ENCODE measurements at regions of chr7 and their contacts with region 1.

Region 1: GRCh38 chr7:65750511-65751344 is 122.1 kb upstream of the VKORC1L1 start:
- DNase-seq: peak; percentile 86 to 99 (median 92)

Region 2: DNA sequence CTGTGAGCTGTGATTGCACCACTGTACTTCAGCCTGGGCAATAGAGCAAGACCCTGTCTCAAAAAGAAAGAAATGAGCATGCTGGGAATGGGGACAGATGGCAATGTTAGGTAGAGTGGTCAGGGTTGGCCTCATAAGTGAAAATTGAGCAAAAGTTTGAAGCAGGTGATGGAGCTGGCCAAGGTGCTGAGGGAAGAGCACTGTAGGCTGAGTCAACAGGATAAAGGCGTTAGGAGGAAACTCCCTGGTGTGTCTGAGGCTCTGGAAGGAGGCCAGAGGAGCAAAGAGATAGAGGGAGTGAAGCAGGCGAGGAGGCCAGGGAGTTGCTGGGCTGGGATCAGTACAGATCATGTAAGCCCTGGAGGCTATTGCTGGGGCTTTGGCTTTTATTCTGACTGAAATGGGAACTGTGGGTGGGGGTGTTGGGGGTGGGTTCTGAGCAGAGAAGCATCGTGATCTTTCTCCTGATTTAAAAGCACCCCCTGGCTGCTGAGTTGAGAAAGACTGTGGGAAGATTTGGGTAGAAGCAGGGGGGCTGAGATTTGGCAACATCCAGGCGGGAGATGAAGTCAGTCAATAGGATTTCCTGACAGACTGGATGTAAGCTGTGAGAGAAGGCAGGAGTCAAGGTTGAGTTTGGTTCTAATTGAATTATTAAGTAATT is 69.7 kb after region 1 on chr7:
- intact Hi-C with region 1: no loop called
- DNase-seq: no peak

Region 3: GRCh38 chr7:65872776-65873581 is 122.3 kb after region 1 on chr7 and contains the start of gene VKORC1L1:
- intact Hi-C with region 1: loop called (anchors 10 kb)
- DNase-seq: peak; percentile 83 to 98 (median 91)

Region 4: DNA sequence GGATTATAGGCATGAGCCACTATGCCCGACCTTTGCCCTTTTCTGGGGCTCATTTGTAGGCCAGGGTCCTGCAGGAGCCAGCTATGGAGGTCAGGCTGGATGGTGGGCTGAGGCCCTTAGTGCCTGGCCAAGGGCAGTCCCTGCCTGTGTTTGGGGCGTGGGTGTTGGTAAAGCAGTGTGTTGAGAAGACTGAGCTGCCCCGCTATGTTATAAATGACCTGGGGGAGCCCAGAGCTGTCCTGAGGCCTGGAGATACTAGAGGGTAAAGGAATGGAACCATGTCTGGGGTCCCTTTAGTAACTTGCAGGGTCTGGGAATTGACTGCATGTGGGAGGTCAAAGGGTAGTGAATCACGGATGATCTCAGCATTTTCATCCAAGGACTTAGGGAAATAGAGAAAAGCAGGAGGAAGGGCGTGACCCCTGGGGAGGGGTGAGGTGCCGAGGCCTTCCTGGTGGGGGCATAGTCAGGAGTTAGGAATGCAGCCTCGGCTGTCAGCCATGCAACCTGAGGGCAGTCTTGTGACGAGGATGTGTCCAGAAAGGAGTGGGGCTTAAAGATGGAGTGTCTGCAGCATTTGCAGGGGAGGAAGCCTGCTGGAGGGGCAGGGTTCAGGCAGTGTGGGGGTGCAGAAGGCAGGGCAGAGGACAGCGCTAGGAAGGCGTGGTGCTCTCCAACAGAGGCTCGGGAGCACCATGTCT is 1201.8 kb after region 1 on chr7:
- intact Hi-C with region 1: no loop called
- DNase-seq: peak in 1 of 10 donors; percentile 31